Sigmoid colon (tissue), 7 donors: ENCODE measurements at regions of chr2 and their contacts with region 1.

Region 1: GRCh38 chr2:197286805-197287598 is 23.6 kb downstream of the ANKRD44 start:
- DNase-seq: peak; percentile 92
- H3K4me3 ChIP-seq: no peak overlapping the region
- H3K27ac ChIP-seq: peak overlapping the region; percentile 59 to 83 (median 75)
- H3K4me1 ChIP-seq: peaks cover 0 to 41% (median 30%) of the 10 kb centered on the region in 4 donors
- H3K27me3 ChIP-seq: no peaks in the 10 kb centered on the region
- CTCF ChIP-seq: no peak
- EP300 ChIP-seq: peak in 1 of 4 donors; percentile 8
- POLR2A ChIP-seq: no peak

Region 2: GRCh38 chr2:197255543-197255942 is 31.5 kb before region 1 on chr2:
- intact Hi-C with region 1: loop called (anchors 5 kb)
- DNase-seq: peak; percentile 88
- H3K4me3 ChIP-seq: peak overlapping the region in 2 of 4 donors; percentile 23 to 26
- H3K27ac ChIP-seq: peak overlapping the region; percentile 61 to 87 (median 78)
- H3K4me1 ChIP-seq: peaks cover 0 to 60% (median 40%) of the 10 kb centered on the region in 4 donors
- H3K27me3 ChIP-seq: no peaks in the 10 kb centered on the region
- CTCF ChIP-seq: no peak
- EP300 ChIP-seq: no peak
- POLR2A ChIP-seq: no peak